ENCODE measurements at regions of chr13 and their contacts with region 1.

Region 1: DNA sequence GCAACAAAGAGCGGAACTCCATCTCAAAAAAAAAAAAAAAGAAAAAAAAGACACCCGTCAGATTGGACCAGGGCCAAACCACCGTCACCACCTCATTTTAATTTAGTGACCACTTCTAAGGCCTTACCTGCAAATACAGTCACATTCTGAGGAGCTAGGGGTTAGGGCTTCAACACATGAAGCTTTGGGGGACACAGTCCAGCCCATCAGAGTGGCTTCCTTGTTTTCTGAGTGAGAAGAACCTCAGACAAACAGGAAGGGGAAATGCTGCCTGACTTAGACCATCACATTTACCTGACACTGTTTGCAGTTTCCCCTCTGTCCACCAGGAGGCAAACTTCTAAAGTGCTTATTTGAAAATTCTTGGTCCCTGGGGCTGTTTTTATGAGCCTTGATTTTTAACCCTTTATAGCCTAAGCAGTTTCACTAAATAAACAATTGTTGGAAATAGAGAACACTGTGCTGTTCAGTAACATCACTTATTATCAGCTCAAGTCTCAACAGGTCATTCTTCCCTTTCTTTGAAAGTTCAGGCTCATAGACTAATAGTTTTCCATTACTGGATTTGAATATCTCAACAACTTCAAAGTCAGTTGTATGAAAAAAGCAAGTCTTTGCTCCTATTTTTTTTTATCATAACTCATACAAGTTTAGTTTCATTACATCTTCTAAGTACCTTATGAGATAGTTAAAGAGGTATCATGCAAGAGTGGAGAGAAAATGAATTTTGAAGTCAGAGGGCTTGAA is 74.9 kb upstream of the WASF3 start:
- DNase-seq: peak; percentile 78
- H3K4me3 ChIP-seq: no peak overlapping the region
- H3K27ac ChIP-seq: no peak overlapping the region
- H3K27me3 ChIP-seq: no peaks in the 10 kb centered on the region
- CTCF ChIP-seq: peak; percentile 90

Region 2: DNA sequence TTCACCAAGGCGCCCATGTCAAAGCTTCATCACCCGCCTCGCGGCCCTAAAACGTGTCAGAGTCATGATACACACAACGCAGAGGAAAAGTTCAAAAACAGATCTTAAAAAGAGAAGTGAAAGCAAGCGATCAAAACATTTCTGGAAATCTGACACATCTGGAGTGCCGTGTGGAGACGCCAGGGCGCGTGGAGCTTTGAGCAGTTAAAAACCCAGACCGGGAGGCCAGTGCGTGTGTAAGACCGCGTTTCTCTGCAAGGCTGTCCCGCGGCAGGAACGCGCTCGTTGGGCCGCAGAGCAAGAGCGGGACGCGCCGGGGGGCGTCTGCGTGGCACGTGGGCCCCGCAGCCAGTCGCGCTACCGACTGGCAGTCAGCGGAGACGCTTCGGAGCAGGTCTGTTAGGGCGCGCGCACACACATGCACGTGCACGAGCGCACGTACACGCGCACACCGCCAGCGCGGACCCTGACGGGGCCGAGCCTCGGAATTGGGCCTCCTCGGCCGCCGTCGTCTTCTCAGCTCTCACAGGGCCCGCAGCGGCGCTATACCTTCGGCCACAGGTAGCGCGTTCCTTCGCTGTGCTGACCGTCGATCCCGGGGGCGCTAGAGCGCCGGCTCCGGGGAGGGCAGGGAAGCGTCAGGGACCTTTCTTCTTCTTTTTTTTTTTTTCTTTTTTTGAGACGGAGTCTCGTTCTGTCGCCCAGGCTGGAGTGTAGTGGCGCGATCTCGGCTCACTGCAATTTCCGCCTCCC is 296.3 kb before region 1 on chr13:
- in situ Hi-C with region 1: loop called (anchors 25 kb)
- DNase-seq: peak; percentile 84
- H3K4me3 ChIP-seq: peak overlapping the region; percentile 73
- H3K27ac ChIP-seq: peak overlapping the region; percentile 9
- H3K27me3 ChIP-seq: no peaks in the 10 kb centered on the region
- CTCF ChIP-seq: peak; percentile 64

Measured in brain microvascular endothelial cell (primary cell).